Heart right ventricle (tissue), 16 donors: ENCODE measurements at regions of chr10 and their contacts with region 1.

Region 1: GRCh38 chr10:89643431-89644331 is 1.4 kb downstream of the PANK1 start:
- DNase-seq: peak; percentile 58 to 87
- ATAC-seq: peak; percentile 88 to 94 (median 92)
- H3K4me3 ChIP-seq: peak overlapping the region; percentile 70 to 98 (median 83)
- H3K27ac ChIP-seq: peak overlapping the region; percentile 88 to 98 (median 95)
- H3K4me1 ChIP-seq: peaks cover 0 to 49% (median 19%) of the 10 kb centered on the region in 9 donors
- H3K27me3 ChIP-seq: no peaks in the 10 kb centered on the region
- CTCF ChIP-seq: no peak

Region 2: GRCh38 chr10:89426230-89426868 is 217.3 kb before region 1 on chr10:
- intact Hi-C with region 1: loop called in 1 of 10 experiments (anchors 10 kb)
- DNase-seq: peak in 1 of 2 donors; percentile 44
- ATAC-seq: peak; percentile 50 to 87 (median 78)
- H3K4me3 ChIP-seq: no peak overlapping the region
- H3K27ac ChIP-seq: no peak overlapping the region
- H3K4me1 ChIP-seq: peaks cover 0 to 36% (median 4%) of the 10 kb centered on the region in 9 donors
- H3K27me3 ChIP-seq: no peaks in the 10 kb centered on the region
- CTCF ChIP-seq: peak; percentile 76 to 90 (median 84)

Region 3: DNA sequence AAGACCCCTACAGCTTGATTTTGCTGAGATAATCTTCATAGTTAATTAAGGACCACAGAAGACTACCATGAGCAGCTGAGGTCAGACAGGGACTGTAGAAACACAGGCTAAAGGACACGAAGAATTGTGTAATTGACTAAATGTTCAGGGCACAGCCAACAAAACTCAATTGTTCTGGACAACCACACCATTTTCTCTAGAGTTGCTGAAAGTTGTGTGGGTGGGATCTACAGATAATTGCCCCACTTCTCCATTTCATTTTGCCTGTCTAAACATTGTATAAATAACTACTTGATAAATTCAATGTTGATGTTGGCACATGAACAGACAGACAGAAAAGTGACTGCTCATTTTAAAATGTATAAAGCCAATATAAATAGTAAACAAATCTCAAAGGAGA is 69.3 kb before region 1 on chr10:
- intact Hi-C with region 1: no loop called
- DNase-seq: no peak
- ATAC-seq: no peak
- H3K4me3 ChIP-seq: no peak overlapping the region
- H3K27ac ChIP-seq: no peak overlapping the region
- H3K4me1 ChIP-seq: peaks cover 0 to 4% (median 0%) of the 10 kb centered on the region in 9 donors
- H3K27me3 ChIP-seq: no peaks in the 10 kb centered on the region
- CTCF ChIP-seq: no peak

Region 4: GRCh38 chr10:89591111-89591795 is 52.4 kb before region 1 on chr10:
- intact Hi-C with region 1: loop called in 4 of 10 experiments (anchors 1 to 10 kb)
- DNase-seq: peak; percentile 23 to 31
- ATAC-seq: peak; percentile 32 to 80 (median 74)
- H3K4me3 ChIP-seq: no peak overlapping the region
- H3K27ac ChIP-seq: peak overlapping the region; percentile 41 to 85 (median 77)
- H3K4me1 ChIP-seq: peaks cover 0 to 68% (median 19%) of the 10 kb centered on the region in 9 donors
- H3K27me3 ChIP-seq: no peaks in the 10 kb centered on the region
- CTCF ChIP-seq: peak in 2 of 9 donors; percentile 20 to 24

Region 5: GRCh38 chr10:89921422-89921821 is 277.7 kb after region 1 on chr10:
- intact Hi-C with region 1: no loop called
- DNase-seq: no peak
- ATAC-seq: no peak
- H3K4me3 ChIP-seq: no peak overlapping the region
- H3K27ac ChIP-seq: no peak overlapping the region
- H3K4me1 ChIP-seq: no peaks in the 10 kb centered on the region
- H3K27me3 ChIP-seq: peaks cover 0 to 4% (median 0%) of the 10 kb centered on the region in 7 donors
- CTCF ChIP-seq: no peak